ENCODE measurements at regions of chr18 and their contacts with region 1.

Region 1: DNA sequence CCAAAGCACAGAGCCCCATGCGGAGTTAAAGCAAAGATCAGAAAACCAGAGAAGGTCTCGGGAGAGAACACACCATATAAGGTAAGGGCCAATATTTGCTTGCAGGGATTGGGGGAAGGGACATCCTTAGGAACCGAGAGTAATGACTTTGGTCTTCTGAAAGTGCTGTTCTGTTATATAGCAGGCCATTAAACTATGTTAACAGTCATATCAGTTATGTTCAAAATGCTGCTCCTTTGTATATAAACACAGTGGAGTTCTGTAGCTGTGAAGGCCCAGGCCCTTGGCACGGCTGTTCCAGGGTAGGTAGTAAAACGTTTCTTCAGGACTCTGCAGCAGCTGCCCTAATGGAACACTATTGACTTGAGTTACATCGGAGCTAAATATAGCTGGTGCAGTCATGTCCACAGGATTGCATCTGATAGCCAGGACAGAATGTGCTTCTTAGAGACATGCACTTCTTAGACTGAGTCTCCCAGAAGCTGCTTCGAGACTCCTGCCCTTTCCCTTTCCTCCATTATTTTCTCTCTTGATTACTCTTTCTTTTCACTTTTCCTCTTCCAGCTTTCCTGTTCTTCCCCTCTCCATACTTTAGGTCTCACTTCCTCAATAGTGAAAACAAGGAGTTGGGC is 122.4 kb downstream of the SETBP1 start:
- DNase-seq: no peak
- ATAC-seq: no peak
- H3K4me3 ChIP-seq: no peak overlapping the region
- H3K4me3 Mint-ChIP-seq: no peak overlapping the region
- H3K27ac ChIP-seq: no peak overlapping the region
- H3K27ac Mint-ChIP-seq: no peak overlapping the region
- H3K4me1 ChIP-seq: no peaks in the 10 kb centered on the region
- H3K4me1 Mint-ChIP-seq: no peaks in the 10 kb centered on the region
- H3K27me3 ChIP-seq: no peaks in the 10 kb centered on the region
- H3K27me3 Mint-ChIP-seq: no peaks in the 10 kb centered on the region
- CTCF ChIP-seq: no peak

Region 2: GRCh38 chr18:44859751-44860439 is 56.8 kb after region 1 on chr18:
- CTCF ChIA-PET with region 1: no interaction called
- POLR2A ChIA-PET with region 1: no interaction called
- intact Hi-C with region 1: loop called in 1 of 2 experiments (anchors 10 kb)
- DNase-seq: no peak
- ATAC-seq: no peak
- H3K4me3 ChIP-seq: no peak overlapping the region
- H3K4me3 Mint-ChIP-seq: no peak overlapping the region
- H3K27ac ChIP-seq: no peak overlapping the region
- H3K27ac Mint-ChIP-seq: no peak overlapping the region
- H3K4me1 ChIP-seq: no peaks in the 10 kb centered on the region
- H3K4me1 Mint-ChIP-seq: no peaks in the 10 kb centered on the region
- H3K27me3 ChIP-seq: peaks cover 2 to 3% of the 10 kb centered on the region in 2 experiments
- H3K27me3 Mint-ChIP-seq: no peaks in the 10 kb centered on the region
- CTCF ChIP-seq: no peak

Measured in CD4-positive, alpha-beta T cell (primary cell).